B cell (primary cell): ENCODE measurements at regions of chr20 and their contacts with region 1.

Region 1: DNA sequence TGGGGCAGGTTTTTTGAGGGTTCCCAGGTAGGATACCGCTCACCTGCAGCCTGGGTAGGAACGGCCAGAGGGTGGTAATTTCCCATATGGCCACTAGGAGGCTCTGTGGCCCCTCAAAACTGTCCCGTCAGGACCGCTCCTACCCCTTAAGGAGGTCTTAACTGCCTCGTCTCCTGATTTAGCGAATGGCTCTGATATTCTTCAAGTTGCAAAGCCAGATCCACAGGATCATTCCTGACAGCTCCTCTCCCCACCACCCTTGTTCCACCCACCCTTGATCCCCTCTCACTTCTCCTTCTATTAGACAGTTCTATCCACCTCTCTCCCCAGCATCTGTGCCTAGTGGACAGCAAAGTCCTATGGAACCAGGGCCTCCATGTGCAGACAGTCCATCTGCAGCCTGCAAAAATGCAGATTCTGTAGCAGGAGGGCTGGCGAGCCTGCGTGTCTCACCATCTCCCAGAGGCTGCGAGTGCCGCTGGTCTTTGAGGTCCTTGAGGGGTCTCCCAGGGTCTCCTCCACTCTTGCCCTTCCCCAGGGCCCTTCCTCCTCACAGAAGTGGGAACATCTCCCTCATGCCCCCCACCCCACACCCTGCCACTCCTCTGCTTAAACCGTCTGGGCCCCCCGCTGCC is 34.3 kb upstream of the ZBP1 start:
- DNase-seq: peak; percentile 85
- ATAC-seq: peak; percentile 94
- H3K4me3 ChIP-seq: no peak overlapping the region
- H3K4me3 Mint-ChIP-seq: no peak overlapping the region
- H3K27ac ChIP-seq: no peak overlapping the region
- H3K27ac Mint-ChIP-seq: no peak overlapping the region
- H3K4me1 ChIP-seq: peaks cover 4 to 18% of the 10 kb centered on the region in 2 donors
- H3K4me1 Mint-ChIP-seq: peaks cover 34% of the 10 kb centered on the region
- H3K27me3 ChIP-seq: no peaks in the 10 kb centered on the region
- H3K27me3 Mint-ChIP-seq: no peaks in the 10 kb centered on the region
- CTCF ChIP-seq: peak; percentile 95

Region 2: GRCh38 chr20:57622579-57623377 is 31.7 kb before region 1 on chr20:
- CTCF ChIA-PET with region 1: interaction called, 100 read pairs
- POLR2A ChIA-PET with region 1: interaction called, 4 read pairs
- intact Hi-C with region 1: loop called (anchors 1 kb)
- DNase-seq: peak; percentile 69
- ATAC-seq: no peak
- H3K4me3 ChIP-seq: no peak overlapping the region
- H3K4me3 Mint-ChIP-seq: peak overlapping the region; percentile 13
- H3K27ac ChIP-seq: no peak overlapping the region
- H3K27ac Mint-ChIP-seq: peak overlapping the region; percentile 80
- H3K4me1 ChIP-seq: peaks cover 54 to 59% of the 10 kb centered on the region in 2 donors
- H3K4me1 Mint-ChIP-seq: peaks cover 65% of the 10 kb centered on the region
- H3K27me3 ChIP-seq: no peaks in the 10 kb centered on the region
- H3K27me3 Mint-ChIP-seq: no peaks in the 10 kb centered on the region
- CTCF ChIP-seq: peak; percentile 82

Region 3: GRCh38 chr20:57709931-57710799 is 55.7 kb after region 1 on chr20 and contains the start of gene PMEPA1:
- CTCF ChIA-PET with region 1: interaction called, 20 read pairs
- POLR2A ChIA-PET with region 1: no interaction called
- intact Hi-C with region 1: loop called (anchors 2 kb)
- DNase-seq: peak; percentile 97
- ATAC-seq: peak; percentile 86
- H3K4me3 ChIP-seq: peak within 1 kb of the TSS; percentile 59 to 96 (median 83)
- H3K4me3 Mint-ChIP-seq: peak within 1 kb of the TSS; percentile 99
- H3K27ac ChIP-seq: peak within 1 kb of the TSS; percentile 80 to 99
- H3K27ac Mint-ChIP-seq: peak within 1 kb of the TSS; percentile 92
- H3K4me1 ChIP-seq: peaks cover 49 to 55% of the 10 kb centered on the region in 2 donors
- H3K4me1 Mint-ChIP-seq: peaks cover 53% of the 10 kb centered on the region
- H3K27me3 ChIP-seq: no peaks in the 10 kb centered on the region
- H3K27me3 Mint-ChIP-seq: no peaks in the 10 kb centered on the region
- CTCF ChIP-seq: no peak
- total RNA-seq, gene PMEPA1: 37.4 and 38.7 TPM in 2 replicates

Region 4: GRCh38 chr20:57834306-57835170 is 180.1 kb after region 1 on chr20:
- CTCF ChIA-PET with region 1: no interaction called
- POLR2A ChIA-PET with region 1: no interaction called
- intact Hi-C with region 1: no loop called
- DNase-seq: no peak
- ATAC-seq: no peak
- H3K4me3 ChIP-seq: no peak overlapping the region
- H3K4me3 Mint-ChIP-seq: no peak overlapping the region
- H3K27ac ChIP-seq: no peak overlapping the region
- H3K27ac Mint-ChIP-seq: no peak overlapping the region
- H3K4me1 ChIP-seq: no peaks in the 10 kb centered on the region
- H3K4me1 Mint-ChIP-seq: no peaks in the 10 kb centered on the region
- H3K27me3 ChIP-seq: peaks cover 0 to 3% (median 0%) of the 10 kb centered on the region in 4 experiments
- H3K27me3 Mint-ChIP-seq: peaks cover 6% of the 10 kb centered on the region
- CTCF ChIP-seq: no peak

Region 5: DNA sequence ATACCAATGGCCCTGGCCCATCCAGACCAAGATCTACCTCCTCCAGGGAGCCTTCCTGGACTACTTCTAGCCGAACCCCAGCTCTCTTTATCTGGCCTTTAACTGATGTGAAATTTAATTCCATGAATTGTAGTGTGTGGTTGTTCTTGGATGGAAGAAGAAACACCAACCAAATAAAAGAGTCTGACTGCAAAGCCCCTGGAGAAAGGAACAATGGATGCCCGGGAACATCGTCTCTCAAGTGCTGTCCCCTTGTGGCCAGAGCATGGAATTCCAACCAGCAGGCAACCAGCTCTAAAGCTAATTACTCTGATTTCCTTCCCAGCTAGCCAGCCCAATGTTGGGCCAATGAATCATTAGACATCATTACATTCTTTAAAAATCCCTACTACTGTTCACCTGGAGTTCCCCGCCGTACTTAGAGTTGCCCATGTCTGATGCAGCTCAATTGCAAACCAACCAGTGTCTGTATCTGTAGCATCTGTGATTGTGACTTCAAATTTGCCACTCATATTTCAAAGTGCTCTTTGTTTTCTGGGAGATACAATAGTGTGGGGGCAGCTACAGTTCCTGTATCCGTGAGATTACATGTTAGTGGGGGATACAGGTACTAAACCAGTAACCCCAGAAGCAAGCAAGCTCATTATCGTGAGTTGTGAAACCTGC is 432.8 kb after region 1 on chr20:
- CTCF ChIA-PET with region 1: interaction called, 26 read pairs
- POLR2A ChIA-PET with region 1: no interaction called
- intact Hi-C with region 1: no loop called
- DNase-seq: peak; percentile 15
- ATAC-seq: no peak
- H3K4me3 ChIP-seq: no peak overlapping the region
- H3K4me3 Mint-ChIP-seq: no peak overlapping the region
- H3K27ac ChIP-seq: no peak overlapping the region
- H3K27ac Mint-ChIP-seq: no peak overlapping the region
- H3K4me1 ChIP-seq: no peaks in the 10 kb centered on the region
- H3K4me1 Mint-ChIP-seq: no peaks in the 10 kb centered on the region
- H3K27me3 ChIP-seq: no peaks in the 10 kb centered on the region
- H3K27me3 Mint-ChIP-seq: peaks cover 27% of the 10 kb centered on the region
- CTCF ChIP-seq: peak; percentile 53

Region 6: DNA sequence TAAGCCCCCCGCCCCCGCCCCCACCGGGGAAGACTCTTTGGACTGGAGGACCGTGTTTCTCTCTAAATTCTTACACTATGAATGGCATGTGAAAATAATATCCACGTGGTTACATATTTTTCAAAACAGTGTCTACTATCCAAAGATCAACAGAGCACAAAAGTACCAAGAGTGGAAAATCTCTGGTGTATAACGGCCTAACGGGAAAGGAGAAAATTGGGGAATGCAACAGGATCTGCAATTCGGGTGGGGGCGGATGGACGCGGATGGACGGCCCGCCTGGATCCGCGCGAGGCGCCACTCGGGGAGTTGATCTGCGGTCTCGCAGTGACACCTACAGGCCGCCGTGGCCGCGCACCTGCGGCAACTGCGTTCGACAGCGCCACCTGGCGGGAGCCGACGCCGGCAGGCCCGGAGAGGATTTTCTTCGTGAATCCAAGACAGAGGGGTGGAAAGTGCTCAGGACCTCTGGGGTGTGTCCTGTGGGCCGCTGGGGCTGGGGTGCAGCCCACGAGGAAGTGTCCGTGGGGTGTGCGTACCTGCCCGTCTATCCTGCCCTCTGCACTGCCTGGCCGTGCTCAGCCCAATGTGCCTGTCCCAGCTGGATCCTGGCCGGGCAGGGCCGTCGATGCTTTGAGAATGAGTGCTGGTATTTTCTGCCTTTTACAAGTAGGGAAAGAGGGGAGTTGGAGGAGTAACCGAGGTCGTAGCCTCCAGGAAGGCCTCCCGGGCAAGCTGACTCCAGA is 555.3 kb after region 1 on chr20:
- CTCF ChIA-PET with region 1: interaction called, 4 read pairs
- POLR2A ChIA-PET with region 1: no interaction called
- intact Hi-C with region 1: loop called (anchors 1 kb)
- DNase-seq: peak; percentile 88
- ATAC-seq: peak; percentile 89
- H3K4me3 ChIP-seq: no peak overlapping the region
- H3K4me3 Mint-ChIP-seq: peak overlapping the region; percentile 14
- H3K27ac ChIP-seq: no peak overlapping the region
- H3K27ac Mint-ChIP-seq: no peak overlapping the region
- H3K4me1 ChIP-seq: peaks cover 0 to 6% of the 10 kb centered on the region in 2 donors
- H3K4me1 Mint-ChIP-seq: peaks cover 3% of the 10 kb centered on the region
- H3K27me3 ChIP-seq: peaks cover 0 to 8% (median 2%) of the 10 kb centered on the region in 4 experiments
- H3K27me3 Mint-ChIP-seq: peaks cover 14% of the 10 kb centered on the region
- CTCF ChIP-seq: peak; percentile 100